ENCODE measurements at regions of chr13 and their contacts with region 1.

Region 1: DNA sequence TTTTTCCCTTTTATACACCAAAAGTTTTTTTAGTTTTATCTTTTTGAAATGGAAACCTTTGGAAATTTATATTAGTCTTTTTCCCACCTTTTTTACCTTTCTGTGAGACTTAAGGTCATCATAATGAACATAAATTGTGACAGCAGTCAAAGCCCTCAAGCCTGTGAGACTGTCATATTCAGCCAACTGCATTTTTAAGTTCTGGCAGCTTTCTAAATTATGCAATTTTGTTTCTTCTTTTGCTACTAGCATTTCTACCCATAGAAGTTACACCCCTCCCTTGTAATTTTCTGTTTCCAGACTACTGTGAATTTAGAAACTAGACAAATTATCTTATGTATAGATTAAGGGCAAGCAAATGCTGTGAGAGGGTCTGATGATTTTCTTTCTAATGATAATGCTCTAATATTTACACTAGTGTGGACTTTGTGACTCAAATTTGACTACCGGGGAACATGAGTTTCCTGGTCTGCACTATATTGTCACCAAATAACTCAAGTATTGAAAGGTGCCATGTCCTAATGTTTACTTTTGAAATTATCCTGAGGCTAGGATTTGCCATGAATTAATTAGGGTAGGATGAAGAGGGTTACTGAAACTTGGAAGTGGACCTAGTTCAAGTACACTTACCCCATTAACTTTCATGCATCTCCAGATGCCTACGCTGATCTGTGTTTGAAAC is 43.7 kb downstream of the FRY start:
- DNase-seq: no peak
- H3K4me3 ChIP-seq: no peak overlapping the region
- H3K27ac ChIP-seq: no peak overlapping the region
- H3K4me1 ChIP-seq: no peaks in the 10 kb centered on the region
- H3K27me3 ChIP-seq: no peaks in the 10 kb centered on the region
- CTCF ChIP-seq: no peak

Region 2: DNA sequence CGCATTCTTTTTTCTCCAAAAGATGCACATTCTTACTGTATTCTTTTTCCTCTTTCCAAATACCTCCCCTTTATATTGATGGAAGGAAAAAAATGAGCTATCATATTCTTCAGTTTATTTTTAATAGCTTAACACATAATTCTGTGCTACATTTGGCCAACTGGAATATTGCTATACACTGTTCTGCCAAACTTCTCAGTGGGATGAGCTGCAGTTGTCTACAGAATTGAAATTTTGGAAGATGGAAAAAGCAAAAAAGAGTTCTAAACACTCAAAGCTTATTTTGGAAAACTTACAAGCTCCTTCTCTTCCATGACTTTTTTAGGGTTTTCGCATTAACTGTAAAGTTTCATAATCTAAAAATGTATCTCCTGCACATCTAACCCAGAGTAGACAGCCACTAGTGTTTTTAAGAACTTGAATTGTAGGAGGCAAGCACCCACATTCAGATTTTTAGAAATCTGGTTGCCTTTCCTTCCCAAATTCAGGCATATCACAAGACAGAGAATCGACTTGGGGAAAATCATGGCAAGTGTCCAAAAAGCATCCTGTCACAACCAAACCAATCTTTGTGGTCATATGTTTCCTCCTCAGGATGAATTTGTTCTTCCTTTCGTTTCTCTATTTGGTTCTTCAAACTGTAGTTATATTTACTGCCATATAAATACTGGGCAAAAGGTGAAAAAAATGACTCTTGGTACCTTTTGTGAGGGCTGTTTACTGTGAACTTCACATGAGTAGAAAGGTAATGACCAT is 155.2 kb before region 1 on chr13:
- CTCF ChIA-PET with region 1: no interaction called
- POLR2A ChIA-PET with region 1: no interaction called
- intact Hi-C with region 1: no loop called
- DNase-seq: no peak
- H3K4me3 ChIP-seq: no peak overlapping the region
- H3K27ac ChIP-seq: no peak overlapping the region
- H3K4me1 ChIP-seq: no peaks in the 10 kb centered on the region
- H3K27me3 ChIP-seq: no peaks in the 10 kb centered on the region
- CTCF ChIP-seq: no peak

Region 3: GRCh38 chr13:32164622-32165268 is 89.4 kb after region 1 on chr13:
- CTCF ChIA-PET with region 1: no interaction called
- POLR2A ChIA-PET with region 1: no interaction called
- intact Hi-C with region 1: no loop called
- DNase-seq: peak in 1 of 2 experiments; percentile 10
- H3K4me3 ChIP-seq: no peak overlapping the region
- H3K27ac ChIP-seq: no peak overlapping the region
- H3K4me1 ChIP-seq: no peaks in the 10 kb centered on the region
- H3K27me3 ChIP-seq: no peaks in the 10 kb centered on the region
- CTCF ChIP-seq: peak; percentile 58; the same call in 1 of the 2 replicates

Region 4: DNA sequence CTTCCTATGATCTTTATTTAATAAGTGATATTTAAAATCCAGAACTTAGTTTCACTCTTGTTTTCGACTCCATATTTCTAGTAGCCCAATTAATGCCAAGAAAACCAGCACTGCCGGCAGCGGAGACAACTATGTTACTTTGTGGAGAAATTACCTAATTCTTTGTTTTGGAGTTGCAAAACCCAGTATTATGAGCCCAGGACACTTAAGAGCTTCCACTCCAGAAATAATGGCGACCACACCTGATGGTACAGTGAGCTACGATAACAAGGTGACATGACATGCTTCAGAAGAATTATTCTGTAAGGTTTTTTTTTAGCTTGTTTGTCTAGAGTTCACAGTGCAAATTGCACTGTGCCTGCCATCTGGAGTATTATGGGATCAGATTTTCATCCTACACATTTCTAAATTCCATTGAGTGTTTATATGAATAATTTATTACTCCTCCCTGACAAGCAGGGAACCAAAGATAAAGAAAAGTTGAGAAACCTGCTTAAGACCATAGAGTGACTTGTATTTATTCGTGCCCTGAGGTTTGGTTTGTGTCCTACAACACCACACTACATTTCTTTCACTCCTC is 103.5 kb after region 1 on chr13:
- CTCF ChIA-PET with region 1: interaction called, 13 read pairs
- POLR2A ChIA-PET with region 1: no interaction called
- intact Hi-C with region 1: no loop called
- DNase-seq: no peak
- H3K4me3 ChIP-seq: no peak overlapping the region
- H3K27ac ChIP-seq: no peak overlapping the region
- H3K4me1 ChIP-seq: no peaks in the 10 kb centered on the region
- H3K27me3 ChIP-seq: no peaks in the 10 kb centered on the region
- CTCF ChIP-seq: no peak

Measured in PC-9 (cell line).